Calu3 (cell line): ENCODE measurements at regions of chr19 and their contacts with region 1.

Region 1: DNA sequence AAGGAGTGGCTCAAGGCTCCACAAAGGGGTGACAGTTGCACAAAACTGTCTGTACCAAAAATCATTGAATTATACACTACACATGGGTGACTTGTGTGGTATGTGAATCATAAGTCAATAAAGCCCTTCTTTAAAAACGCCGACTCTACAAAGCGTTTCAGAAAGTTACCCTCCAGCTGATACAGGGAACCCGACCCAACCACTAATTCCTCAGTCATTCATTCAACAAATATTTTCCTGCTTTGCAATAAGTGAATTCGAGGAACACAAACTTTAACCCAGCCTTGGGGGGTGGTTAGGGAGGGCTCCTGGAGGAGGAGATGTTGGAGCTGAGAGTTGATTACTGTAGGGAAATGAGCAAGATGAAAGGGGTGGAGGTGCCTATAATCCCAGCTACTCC is 32.0 kb downstream of the LTBP4 start:
- DNase-seq: no peak
- H3K4me3 Mint-ChIP-seq: no peak overlapping the region
- H3K27ac Mint-ChIP-seq: no peak overlapping the region
- H3K4me1 Mint-ChIP-seq: peaks cover 9% of the 10 kb centered on the region
- H3K27me3 Mint-ChIP-seq: peaks cover 24% of the 10 kb centered on the region
- CTCF ChIP-seq: no peak

Region 2: GRCh38 chr19:40200341-40201099 is 432.7 kb before region 1 on chr19:
- CTCF ChIA-PET with region 1: interaction called, 10 read pairs
- intact Hi-C with region 1: no loop called
- DNase-seq: no peak
- H3K4me3 Mint-ChIP-seq: no peak overlapping the region
- H3K27ac Mint-ChIP-seq: no peak overlapping the region
- H3K4me1 Mint-ChIP-seq: no peaks in the 10 kb centered on the region
- H3K27me3 Mint-ChIP-seq: no peaks in the 10 kb centered on the region
- CTCF ChIP-seq: no peak

Region 3: GRCh38 chr19:40305403-40305802 is 327.8 kb before region 1 on chr19:
- CTCF ChIA-PET with region 1: interaction called, 14 read pairs
- intact Hi-C with region 1: loop called (anchors 10 kb)
- DNase-seq: peak; percentile 83
- H3K4me3 Mint-ChIP-seq: no peak overlapping the region
- H3K27ac Mint-ChIP-seq: no peak overlapping the region
- H3K4me1 Mint-ChIP-seq: no peaks in the 10 kb centered on the region
- H3K27me3 Mint-ChIP-seq: no peaks in the 10 kb centered on the region
- CTCF ChIP-seq: peak; percentile 88

Region 4: GRCh38 chr19:40603389-40604135 is 29.6 kb before region 1 on chr19:
- CTCF ChIA-PET with region 1: interaction called, 31 read pairs
- intact Hi-C with region 1: no loop called
- DNase-seq: peak; percentile 99
- H3K4me3 Mint-ChIP-seq: peak overlapping the region; percentile 69
- H3K27ac Mint-ChIP-seq: peak overlapping the region; percentile 62
- H3K4me1 Mint-ChIP-seq: peaks cover 77% of the 10 kb centered on the region
- H3K27me3 Mint-ChIP-seq: peaks cover 60% of the 10 kb centered on the region
- CTCF ChIP-seq: no peak

Region 5: DNA sequence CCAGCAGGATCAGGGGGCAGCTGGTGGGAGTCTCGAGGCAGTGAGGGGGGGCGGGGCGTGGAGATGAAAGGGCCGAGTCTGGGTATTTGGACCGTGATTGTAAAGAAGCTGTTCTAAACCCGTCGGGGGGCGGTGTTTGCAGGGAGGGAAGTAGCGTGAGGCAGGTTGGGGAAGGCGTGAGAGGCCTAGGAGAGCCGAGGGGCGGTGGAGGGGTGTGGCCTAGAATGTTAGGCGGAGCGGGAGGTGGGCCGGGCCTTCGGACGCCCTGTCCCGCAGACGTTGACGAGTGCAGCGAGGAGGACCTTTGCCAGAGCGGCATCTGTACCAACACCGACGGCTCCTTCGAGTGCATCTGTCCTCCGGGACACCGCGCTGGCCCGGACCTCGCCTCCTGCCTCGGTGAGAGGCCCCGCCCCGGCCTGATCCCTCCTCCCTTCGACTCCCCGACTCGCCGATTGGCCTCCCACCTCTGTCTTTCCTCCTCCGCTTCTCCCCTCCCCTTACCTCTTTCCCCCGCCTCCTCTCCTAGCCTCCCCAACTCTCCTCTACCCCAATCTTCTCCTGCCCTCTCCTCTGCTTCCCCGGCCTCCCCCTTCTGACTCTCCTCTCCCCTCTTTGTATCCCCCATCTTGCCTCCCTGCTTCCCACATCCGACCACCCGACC is 19.4 kb before region 1 on chr19:
- CTCF ChIA-PET with region 1: no interaction called
- intact Hi-C with region 1: no loop called
- DNase-seq: peak; percentile 73
- H3K4me3 Mint-ChIP-seq: peak overlapping the region; percentile 58
- H3K27ac Mint-ChIP-seq: no peak overlapping the region
- H3K4me1 Mint-ChIP-seq: peaks cover 24% of the 10 kb centered on the region
- H3K27me3 Mint-ChIP-seq: peaks cover 27% of the 10 kb centered on the region
- CTCF ChIP-seq: no peak

Region 6: DNA sequence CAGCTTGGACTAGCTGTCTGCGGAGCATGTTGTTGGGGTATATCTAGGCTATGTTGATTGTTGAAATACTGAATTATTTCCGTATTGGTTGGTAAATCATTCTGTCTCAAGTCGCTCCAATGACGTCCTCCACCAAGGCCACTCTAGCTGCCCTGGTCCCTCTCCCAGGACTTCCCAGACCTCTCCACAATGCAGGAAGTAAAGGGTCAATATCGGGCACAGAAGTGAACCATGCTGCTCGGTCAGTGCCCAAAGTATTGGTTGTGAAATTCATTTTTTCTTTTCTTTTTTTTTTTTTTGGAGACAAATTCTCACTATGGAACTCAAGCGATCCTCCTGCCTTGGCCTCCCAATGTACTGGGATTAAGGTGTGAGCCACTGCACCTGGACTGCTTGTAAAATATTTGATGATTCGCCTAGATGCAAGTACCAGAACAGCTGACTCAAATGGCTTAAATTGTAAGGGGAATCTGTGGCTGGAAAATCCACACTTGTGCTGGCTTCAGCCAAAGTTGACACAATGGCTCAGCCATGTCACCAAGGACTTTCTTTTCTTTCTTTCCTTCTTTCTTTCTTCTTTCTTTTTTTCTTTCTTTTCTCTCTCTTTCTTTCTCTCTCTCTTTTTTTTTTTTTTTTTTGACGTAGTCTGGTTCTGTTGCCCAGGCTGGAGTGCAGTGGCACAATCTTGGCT is 13.5 kb after region 1 on chr19:
- CTCF ChIA-PET with region 1: interaction called, 30 read pairs
- intact Hi-C with region 1: no loop called
- DNase-seq: peak; percentile 43
- H3K4me3 Mint-ChIP-seq: peak overlapping the region; percentile 63
- H3K27ac Mint-ChIP-seq: peak overlapping the region; percentile 69
- H3K4me1 Mint-ChIP-seq: peaks cover 21% of the 10 kb centered on the region
- H3K27me3 Mint-ChIP-seq: no peaks in the 10 kb centered on the region
- CTCF ChIP-seq: no peak